ENCODE measurements at regions of chr9 and their contacts with region 1.

Region 1: GRCh38 chr9:84315278-84315877 is 25.2 kb downstream of the SLC28A3 start:
- DNase-seq: peak; percentile 38 to 52
- H3K4me3 ChIP-seq: no peak overlapping the region
- H3K27ac ChIP-seq: no peak overlapping the region
- H3K4me1 ChIP-seq: no peaks in the 10 kb centered on the region
- H3K27me3 ChIP-seq: no peaks in the 10 kb centered on the region
- CTCF ChIP-seq: peak; percentile 91

Region 2: DNA sequence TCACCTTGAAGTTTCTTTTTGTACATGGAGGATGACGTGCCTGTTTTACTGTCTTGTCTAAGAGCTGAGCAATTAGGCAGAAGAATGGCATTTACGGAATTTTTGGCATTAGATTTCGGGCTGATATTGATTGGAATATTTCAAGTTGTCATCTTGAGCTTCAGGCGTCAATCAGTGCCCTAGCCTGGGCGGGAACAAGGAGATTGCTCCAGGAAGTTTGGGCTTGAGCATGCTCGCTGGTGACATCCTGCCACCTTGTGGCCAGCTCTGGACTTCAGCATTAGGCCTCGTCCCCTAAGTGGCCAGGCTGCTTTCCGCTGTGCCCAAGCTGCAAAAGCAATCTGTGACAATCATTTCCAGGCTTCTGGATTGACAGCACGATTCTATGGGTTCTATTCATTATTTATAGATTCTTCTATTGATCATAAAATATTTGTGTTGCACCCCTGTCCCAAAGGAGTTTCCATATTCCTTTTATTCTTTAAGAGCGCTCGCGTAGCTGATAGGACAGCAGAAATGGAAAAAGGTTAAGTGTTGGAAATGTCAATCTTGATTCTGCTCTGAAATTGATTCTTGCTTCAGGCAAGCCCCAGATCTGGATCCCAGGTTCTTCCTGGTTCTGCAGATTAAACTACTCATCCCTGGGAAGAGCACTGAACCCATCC is 54.2 kb before region 1 on chr9:
- CTCF ChIA-PET with region 1: interaction called, 3 read pairs
- POLR2A ChIA-PET with region 1: no interaction called
- intact Hi-C with region 1: loop called (anchors 1 kb)
- DNase-seq: peak; percentile 72 to 77
- H3K4me3 ChIP-seq: no peak overlapping the region
- H3K27ac ChIP-seq: no peak overlapping the region
- H3K4me1 ChIP-seq: 0 out of 2 replicates have a peak, but pooled peaks cover 3% of the 10 kb centered on the region
- H3K27me3 ChIP-seq: no peaks in the 10 kb centered on the region
- CTCF ChIP-seq: peak; percentile 90

Measured in PC-9 (cell line).